ENCODE measurements at regions of chr11 and their contacts with region 1.

Region 1: DNA sequence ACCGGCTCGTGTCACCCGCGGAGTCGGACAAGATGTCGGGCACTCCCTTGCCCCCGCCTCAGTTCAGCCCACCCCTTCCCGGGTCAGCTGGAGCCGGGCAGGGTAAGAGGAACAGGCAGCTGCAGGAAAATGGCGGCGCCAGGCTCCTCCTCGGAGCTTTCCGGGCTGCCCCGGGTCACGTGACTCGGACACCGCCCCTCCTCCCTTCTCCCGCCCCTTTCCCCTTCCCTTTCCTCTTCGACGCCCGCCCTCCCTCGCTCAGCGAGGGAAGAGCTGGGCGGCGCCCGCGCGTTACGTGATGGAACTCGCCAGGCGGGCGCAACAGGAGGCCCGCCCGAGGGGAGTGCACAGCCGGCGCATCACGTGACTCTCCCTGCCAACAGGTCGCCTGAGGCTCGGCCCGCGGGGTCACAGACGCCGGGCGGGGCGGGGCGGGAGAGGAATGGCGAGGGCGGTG is at the start of gene PICALM:
- DNase-seq: peak; percentile 97
- ATAC-seq: peak; percentile 79
- H3K4me3 ChIP-seq: peak within 1 kb of the TSS; percentile 91
- H3K27ac ChIP-seq: peak within 1 kb of the TSS; percentile 97
- H3K4me1 ChIP-seq: peaks cover 27% of the 10 kb centered on the region
- H3K27me3 ChIP-seq: no peaks in the 10 kb centered on the region
- CTCF ChIP-seq: no peak
- total RNA-seq, gene PICALM: 53.0 and 59.3 TPM in 2 replicates

Region 2: DNA sequence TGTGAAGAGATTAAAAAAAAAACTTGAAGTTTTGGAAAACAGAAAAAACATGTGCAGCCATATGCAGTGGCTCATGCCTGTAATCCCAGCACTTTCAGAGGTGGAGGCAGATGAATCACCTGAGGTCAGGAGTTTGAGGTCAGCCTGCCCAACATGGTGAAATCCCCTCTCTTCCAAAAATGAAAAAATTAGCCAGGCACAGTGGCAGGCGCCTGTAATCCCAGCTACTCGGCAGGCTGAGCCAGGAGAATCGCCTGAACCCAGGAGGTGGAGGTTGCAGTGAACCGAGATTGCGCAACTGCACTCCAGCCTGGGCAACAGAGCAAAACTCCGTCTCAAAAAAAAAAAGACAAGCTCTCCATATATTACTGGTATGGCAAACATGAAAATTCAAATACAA is 449.5 kb before region 1 on chr11:
- CTCF ChIA-PET with region 1: interaction called, 13 read pairs
- POLR2A ChIA-PET with region 1: no interaction called
- intact Hi-C with region 1: no loop called
- DNase-seq: no peak
- ATAC-seq: no peak
- H3K4me3 ChIP-seq: no peak overlapping the region
- H3K27ac ChIP-seq: no peak overlapping the region
- H3K4me1 ChIP-seq: no peaks in the 10 kb centered on the region
- H3K27me3 ChIP-seq: no peaks in the 10 kb centered on the region
- CTCF ChIP-seq: no peak

Region 3: GRCh38 chr11:86035164-86035563 is 33.8 kb before region 1 on chr11:
- CTCF ChIA-PET with region 1: no interaction called
- POLR2A ChIA-PET with region 1: no interaction called
- intact Hi-C with region 1: no loop called
- DNase-seq: no peak
- ATAC-seq: no peak
- H3K4me3 ChIP-seq: no peak overlapping the region
- H3K27ac ChIP-seq: no peak overlapping the region
- H3K4me1 ChIP-seq: no peaks in the 10 kb centered on the region
- H3K27me3 ChIP-seq: no peaks in the 10 kb centered on the region
- CTCF ChIP-seq: no peak

Region 4: DNA sequence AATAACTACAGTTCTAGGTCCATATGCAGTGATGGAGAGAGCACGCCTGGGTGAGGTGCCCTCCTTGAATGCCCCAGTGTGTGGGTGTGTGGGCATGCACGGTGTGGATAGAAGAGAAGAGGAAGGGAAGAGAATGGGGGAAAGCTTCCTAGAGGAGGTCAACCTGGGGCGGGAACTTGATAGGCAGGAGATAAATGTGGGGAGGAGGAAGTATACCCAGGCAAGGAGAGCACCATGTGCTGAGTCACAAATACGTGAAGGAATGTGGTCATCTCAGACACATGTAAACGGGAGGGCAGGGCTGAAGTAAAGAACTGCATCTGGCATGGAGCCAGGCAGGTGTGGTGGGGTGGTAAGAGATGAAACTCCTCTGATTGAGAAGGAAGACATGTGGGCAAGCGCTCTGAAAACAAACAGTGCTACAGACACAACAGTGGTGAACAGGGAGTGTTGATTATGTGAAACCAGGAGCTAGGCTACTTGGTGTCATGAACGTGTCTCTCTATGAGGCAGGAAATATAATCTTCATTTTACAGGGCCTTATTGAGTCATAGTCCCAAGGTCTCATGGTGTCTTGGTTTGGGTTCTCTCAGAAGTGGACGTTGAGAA is 114.1 kb after region 1 on chr11:
- CTCF ChIA-PET with region 1: no interaction called
- POLR2A ChIA-PET with region 1: no interaction called
- intact Hi-C with region 1: loop called (anchors 2 kb)
- DNase-seq: peak; percentile 83
- ATAC-seq: peak; percentile 76
- H3K4me3 ChIP-seq: no peak overlapping the region
- H3K27ac ChIP-seq: peak overlapping the region; percentile 12
- H3K4me1 ChIP-seq: peaks cover 19% of the 10 kb centered on the region
- H3K27me3 ChIP-seq: no peaks in the 10 kb centered on the region
- CTCF ChIP-seq: no peak

Region 5: DNA sequence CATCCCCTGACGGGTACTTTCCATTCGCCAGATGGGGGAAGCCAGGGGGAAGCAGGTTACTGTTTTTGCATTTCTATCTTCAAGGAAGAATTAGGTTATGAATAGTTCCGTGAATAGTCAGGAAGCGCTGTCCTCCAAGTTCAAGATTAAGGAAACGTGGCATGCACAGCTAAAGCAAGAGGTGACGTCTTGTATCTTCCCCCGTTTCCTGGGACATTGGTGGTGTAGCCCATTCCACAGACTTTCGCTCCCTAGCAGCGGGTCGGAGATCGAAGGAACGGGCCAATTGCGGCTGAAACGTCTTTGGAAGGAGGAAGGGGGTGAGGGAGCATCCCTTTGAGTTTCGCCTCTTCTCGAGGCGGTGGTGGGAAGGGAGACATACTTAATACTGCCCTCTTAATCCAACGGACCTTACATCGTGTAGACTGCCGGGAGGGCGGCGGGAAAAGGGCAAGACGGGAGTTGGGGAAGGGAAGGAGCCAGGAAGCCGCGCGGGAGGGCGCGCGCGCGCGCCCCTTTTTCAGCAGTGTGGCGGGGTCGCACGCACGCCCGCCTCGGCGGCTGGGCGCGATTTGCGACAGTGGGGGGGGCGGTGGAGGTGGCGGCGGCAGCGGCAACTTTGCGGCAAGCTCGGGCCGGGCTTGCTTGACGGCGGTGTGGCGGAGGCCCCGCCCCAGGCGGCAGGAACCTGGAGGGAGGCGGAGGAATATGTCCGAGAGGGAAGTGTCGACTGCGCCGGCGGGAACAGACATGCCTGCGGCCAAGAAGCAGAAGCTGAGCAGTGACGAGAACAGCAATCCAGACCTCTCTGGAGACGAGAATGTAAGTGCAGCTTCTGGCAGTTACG is 175.8 kb after region 1 on chr11 and contains the start of gene EED:
- CTCF ChIA-PET with region 1: no interaction called
- POLR2A ChIA-PET with region 1: interaction called, 4 read pairs
- intact Hi-C with region 1: loop called (anchors 2 kb)
- DNase-seq: peak; percentile 88
- ATAC-seq: peak; percentile 79
- H3K4me3 ChIP-seq: peak within 1 kb of the TSS; percentile 85
- H3K27ac ChIP-seq: peak within 1 kb of the TSS; percentile 95
- H3K4me1 ChIP-seq: peaks cover 25% of the 10 kb centered on the region
- H3K27me3 ChIP-seq: no peaks in the 10 kb centered on the region
- CTCF ChIP-seq: no peak
- total RNA-seq, gene EED: 17.6 and 19.4 TPM in 2 replicates